Activated naive CD4-positive, alpha-beta T cell treated with anti-CD3 and anti-CD28 coated beads, Interleukin-2, amount 10 ng/mL, durations not matched to agents 7 days and 5 days (primary cell): ENCODE measurements at regions of chr3 and their contacts with region 1.

Region 1: GRCh38 chr3:139561959-139562676 is 22.6 kb upstream of the RBP1 start:
- DNase-seq: no peak
- H3K4me3 Mint-ChIP-seq: no peak overlapping the region
- H3K27ac Mint-ChIP-seq: no peak overlapping the region
- H3K4me1 Mint-ChIP-seq: no peaks in the 10 kb centered on the region
- H3K27me3 Mint-ChIP-seq: no peaks in the 10 kb centered on the region

Region 2: DNA sequence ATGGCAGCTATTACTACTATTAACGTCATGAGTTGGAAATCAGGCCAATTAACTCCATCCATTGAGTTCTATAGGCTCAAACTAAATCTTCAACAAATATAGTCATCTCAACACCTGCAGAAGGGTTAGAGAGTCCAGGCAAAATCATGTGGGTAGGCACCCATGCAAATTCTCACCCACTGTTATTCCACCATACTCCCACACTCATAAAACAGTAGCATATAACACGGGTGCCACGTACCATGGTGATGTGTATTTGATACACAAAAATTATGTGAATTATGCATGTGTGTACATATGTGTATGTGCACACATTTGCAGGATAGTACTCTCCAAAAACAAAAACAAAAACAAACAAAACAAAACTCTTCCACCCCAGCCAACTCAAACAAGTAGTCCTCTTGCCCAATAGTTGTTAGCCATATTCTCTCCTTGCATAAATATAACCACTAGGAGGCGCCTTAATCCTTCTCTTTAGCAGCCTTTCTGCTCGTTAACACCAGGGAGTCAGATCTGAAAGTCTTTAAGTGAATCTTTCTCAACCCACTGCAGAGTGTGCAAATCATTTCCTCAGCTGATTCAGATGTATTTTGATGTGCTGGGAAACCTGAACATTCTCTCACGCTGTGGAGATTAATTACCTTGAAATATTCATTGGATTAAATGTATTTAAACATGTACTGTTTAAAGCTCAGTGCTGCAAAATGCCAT is 134.7 kb before region 1 on chr3:
- CTCF ChIA-PET with region 1: interaction called, 11 read pairs
- DNase-seq: no peak
- H3K4me3 Mint-ChIP-seq: no peak overlapping the region
- H3K27ac Mint-ChIP-seq: no peak overlapping the region
- H3K4me1 Mint-ChIP-seq: no peaks in the 10 kb centered on the region
- H3K27me3 Mint-ChIP-seq: no peaks in the 10 kb centered on the region